ENCODE measurements at regions of chr9 and their contacts with region 1.

Region 1: GRCh38 chr9:71897577-71897976 is 13.4 kb downstream of the ABHD17B start:
- DNase-seq: no peak
- H3K4me3 Mint-ChIP-seq: peak overlapping the region; percentile 2
- H3K27ac Mint-ChIP-seq: peak overlapping the region; percentile 38
- H3K4me1 Mint-ChIP-seq: peaks cover 76% of the 10 kb centered on the region
- H3K27me3 Mint-ChIP-seq: no peaks in the 10 kb centered on the region

Region 2: DNA sequence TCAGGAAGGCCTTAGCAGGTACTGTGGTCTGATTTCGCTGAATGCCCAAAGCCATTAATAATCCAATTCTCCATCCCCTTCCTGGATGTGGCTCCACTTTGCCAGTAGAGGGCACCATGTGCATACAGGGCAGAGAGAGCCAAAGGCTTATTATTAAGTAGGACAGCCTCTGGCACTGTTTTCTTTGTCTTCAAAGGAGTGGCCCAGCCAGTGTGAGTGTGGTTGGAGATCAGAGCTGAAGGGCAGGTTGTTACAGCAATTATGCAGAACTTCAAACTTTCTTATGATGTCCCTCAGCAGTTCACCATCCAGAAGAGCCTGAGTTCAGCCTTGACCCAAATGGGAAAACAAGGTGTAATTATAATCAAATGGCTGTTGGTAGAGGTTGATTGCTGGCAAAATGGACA is 90.7 kb before region 1 on chr9:
- intact Hi-C with region 1: loop called (anchors 5 kb)
- DNase-seq: peak; percentile 45
- H3K4me3 Mint-ChIP-seq: no peak overlapping the region
- H3K27ac Mint-ChIP-seq: no peak overlapping the region
- H3K4me1 Mint-ChIP-seq: peaks cover 8% of the 10 kb centered on the region
- H3K27me3 Mint-ChIP-seq: peaks cover 9% of the 10 kb centered on the region

Region 3: GRCh38 chr9:71819115-71819739 is 78.3 kb before region 1 on chr9:
- intact Hi-C with region 1: loop called (anchors 5 kb)
- DNase-seq: no peak
- H3K4me3 Mint-ChIP-seq: no peak overlapping the region
- H3K27ac Mint-ChIP-seq: no peak overlapping the region
- H3K4me1 Mint-ChIP-seq: peaks cover 29% of the 10 kb centered on the region
- H3K27me3 Mint-ChIP-seq: peaks cover 7% of the 10 kb centered on the region

Region 4: DNA sequence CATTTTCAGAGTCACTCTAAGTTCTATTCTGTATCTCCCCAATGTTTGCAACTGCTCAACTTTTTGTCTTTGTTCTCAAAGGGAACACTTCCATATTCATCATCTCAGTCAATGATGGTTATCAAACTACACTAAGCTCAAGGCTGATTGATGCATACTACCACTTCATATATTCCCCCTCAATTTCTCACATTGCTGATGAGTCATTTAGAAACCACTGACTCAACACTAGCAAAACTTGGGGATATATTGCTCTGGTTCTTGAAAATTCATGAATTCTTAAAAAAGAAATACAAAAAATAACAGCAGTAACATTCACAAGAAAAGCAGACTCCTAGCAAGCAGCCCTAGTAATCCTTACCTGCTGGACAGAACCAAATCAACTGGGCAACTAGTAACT is 38.8 kb before region 1 on chr9:
- intact Hi-C with region 1: loop called (anchors 2 kb)
- DNase-seq: no peak
- H3K4me3 Mint-ChIP-seq: no peak overlapping the region
- H3K27ac Mint-ChIP-seq: peak overlapping the region; percentile 44
- H3K4me1 Mint-ChIP-seq: peaks cover 29% of the 10 kb centered on the region
- H3K27me3 Mint-ChIP-seq: no peaks in the 10 kb centered on the region

Measured in activated T-helper 2 cell treated with anti-CD3 and anti-CD28 coated beads, Interferon-gamma antibody, Interleukin-2, Interleukin-4, amounts not matched to agents 10 μg/mL and 5 μg/mL and 100 μg/mL, durations not matched to agents 14 hours and 24 hours and 36 hours (primary cell).